ENCODE measurements at regions of chr1 and their contacts with region 1.

Region 1: DNA sequence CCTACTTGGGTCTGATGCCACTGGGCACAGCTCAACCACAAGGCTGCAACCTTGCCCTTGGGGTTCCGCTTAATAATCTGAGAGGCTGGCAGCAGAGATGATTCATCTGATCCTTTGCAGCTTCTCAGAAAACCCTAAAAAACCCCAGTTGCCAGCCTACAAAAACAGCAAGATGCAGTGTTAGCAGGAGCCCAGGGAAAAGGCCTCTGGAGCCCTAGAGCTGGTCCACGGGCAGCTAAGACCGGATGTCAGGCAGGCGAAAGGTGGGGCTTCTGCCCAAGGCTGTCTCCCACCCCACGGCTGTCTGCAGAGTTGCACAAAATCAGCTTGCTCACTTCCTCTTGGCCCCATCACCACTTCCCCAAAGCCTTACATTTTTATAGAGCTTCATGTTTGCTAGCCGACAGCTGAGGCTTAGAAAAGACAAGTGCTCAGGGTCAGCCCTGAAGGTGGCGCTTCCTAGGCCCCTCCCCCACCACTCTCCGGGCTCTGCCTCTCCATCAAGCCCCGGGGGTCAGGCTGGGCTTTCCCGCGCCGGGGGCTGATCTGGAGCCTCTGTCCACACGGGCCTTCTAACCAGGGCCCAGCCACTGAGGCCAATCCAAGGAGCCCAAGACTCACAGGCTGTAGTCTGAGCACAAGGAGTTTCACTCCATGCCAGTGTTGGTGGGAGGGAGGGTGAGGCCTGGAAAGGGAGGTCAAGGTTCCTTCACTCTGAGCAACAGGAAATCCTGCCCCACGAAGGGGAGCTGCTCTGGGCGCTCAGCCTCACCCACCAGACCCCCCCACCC is 4.2 kb upstream of the ADORA3 start:
- DNase-seq: peak; percentile 79
- ATAC-seq: peak; percentile 88
- H3K4me3 Mint-ChIP-seq: peak overlapping the region; percentile 63
- H3K27ac Mint-ChIP-seq: peak overlapping the region; percentile 50; the same call in 1 of the 2 replicates
- H3K4me1 Mint-ChIP-seq: peaks cover 7% of the 10 kb centered on the region
- H3K27me3 Mint-ChIP-seq: no peaks in the 10 kb centered on the region
- CTCF ChIP-seq: no peak

Region 2: DNA sequence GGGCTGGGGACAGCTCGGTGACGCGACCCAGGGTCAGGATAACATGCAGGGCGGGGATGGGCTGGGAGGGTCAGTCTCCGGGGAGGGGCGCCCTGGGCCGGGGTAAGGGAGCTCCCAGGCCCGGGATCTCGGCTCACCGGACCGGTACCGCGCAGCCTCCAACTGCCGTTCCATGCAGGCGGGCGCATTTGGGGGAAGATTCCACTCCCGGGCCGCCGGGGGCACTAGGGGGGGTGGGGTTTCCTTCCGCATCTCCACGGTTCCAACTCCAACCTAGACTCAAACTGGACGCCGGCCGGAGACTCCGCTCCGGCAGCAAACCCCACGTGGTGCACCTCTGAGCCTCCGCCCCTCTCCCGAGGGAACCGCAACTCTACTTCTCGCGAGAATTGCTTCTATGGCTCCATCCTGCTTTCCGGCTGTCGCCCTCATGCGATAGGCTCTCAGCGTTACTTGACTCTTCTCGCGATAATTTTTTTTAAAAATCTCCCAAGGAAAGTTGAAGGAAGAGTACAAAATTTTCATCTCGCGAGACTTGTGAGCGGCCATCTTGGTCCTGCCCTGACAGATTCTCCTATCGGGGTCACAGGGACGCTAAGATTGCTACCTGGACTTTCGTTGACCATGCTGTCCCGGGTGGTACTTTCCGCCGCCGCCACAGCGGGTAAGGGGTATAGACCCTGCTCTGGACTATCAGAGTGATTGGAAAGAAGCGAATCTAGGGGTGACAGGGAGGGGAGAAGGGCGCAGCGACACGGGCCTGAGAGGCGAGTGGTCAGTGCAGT is 58.5 kb before region 1 on chr1 and contains the starts of genes ATP5PB and WDR77:
- CTCF ChIA-PET with region 1: interaction called, 14 read pairs
- POLR2A ChIA-PET with region 1: no interaction called
- DNase-seq: peak; percentile 92
- ATAC-seq: peak; percentile 98
- H3K4me3 Mint-ChIP-seq: peak within 1 kb of the TSS; percentile 100
- H3K27ac Mint-ChIP-seq: peak within 1 kb of the TSS; percentile 99
- H3K4me1 Mint-ChIP-seq: peaks cover 31% of the 10 kb centered on the region
- H3K27me3 Mint-ChIP-seq: no peaks in the 10 kb centered on the region
- CTCF ChIP-seq: no peak
- total RNA-seq, gene ATP5PB: 243 to 284 TPM (median 253 TPM) in 3 replicates
- total RNA-seq, gene WDR77: 52.3 to 64.5 TPM (median 57.5 TPM) in 3 replicates

Region 3: DNA sequence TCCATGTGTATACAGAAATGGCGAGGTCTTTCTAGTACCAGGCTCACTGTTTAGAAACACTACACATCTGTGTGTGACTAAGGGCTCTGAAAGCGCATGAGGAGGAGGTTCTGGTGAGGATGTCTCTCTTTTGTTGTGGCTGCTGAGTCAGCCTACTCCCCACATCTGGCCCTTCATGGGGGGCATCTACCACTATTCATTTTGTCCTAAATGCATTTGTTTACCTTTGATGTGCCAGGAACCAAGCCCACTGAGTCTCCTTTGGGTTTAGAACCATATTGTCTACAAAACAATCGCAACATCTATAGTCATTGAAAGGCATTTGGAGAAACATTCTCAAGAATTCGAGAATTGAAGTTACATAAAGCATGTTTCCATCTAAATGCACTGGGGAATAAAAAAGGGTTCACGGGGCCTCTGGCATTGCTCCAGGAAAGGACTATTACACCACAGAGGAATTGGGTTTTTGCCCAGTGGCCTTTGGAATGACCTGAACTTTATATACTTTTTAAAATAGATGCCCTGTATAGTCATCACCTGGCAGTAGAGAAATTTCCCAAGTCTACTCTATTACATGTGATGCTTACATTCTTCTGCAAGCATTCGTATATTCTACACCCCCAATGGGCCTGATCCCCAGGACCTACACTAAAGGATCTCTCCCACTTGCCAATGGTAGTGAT is 30.9 kb after region 1 on chr1:
- CTCF ChIA-PET with region 1: interaction called, 18 read pairs
- POLR2A ChIA-PET with region 1: no interaction called
- DNase-seq: no peak
- ATAC-seq: peak; percentile 47
- H3K4me3 Mint-ChIP-seq: no peak overlapping the region
- H3K27ac Mint-ChIP-seq: peak overlapping the region; percentile 16; the same call in 1 of the 2 replicates
- H3K4me1 Mint-ChIP-seq: peaks cover 23% of the 10 kb centered on the region
- H3K27me3 Mint-ChIP-seq: peaks cover 19% of the 10 kb centered on the region
- CTCF ChIP-seq: no peak

Region 4: GRCh38 chr1:111565079-111565478 is 57.5 kb after region 1 on chr1:
- CTCF ChIA-PET with region 1: no interaction called
- POLR2A ChIA-PET with region 1: no interaction called
- DNase-seq: no peak
- ATAC-seq: no peak
- H3K4me3 Mint-ChIP-seq: no peak overlapping the region
- H3K27ac Mint-ChIP-seq: no peak overlapping the region
- H3K4me1 Mint-ChIP-seq: no peaks in the 10 kb centered on the region
- H3K27me3 Mint-ChIP-seq: no peaks in the 10 kb centered on the region
- CTCF ChIP-seq: no peak

Region 5: GRCh38 chr1:111628153-111628552 is 120.5 kb after region 1 on chr1:
- CTCF ChIA-PET with region 1: interaction called, 13 read pairs
- POLR2A ChIA-PET with region 1: no interaction called
- DNase-seq: no peak
- ATAC-seq: no peak
- H3K4me3 Mint-ChIP-seq: no peak overlapping the region
- H3K27ac Mint-ChIP-seq: peak overlapping the region; percentile 78
- H3K4me1 Mint-ChIP-seq: peaks cover 12% of the 10 kb centered on the region
- H3K27me3 Mint-ChIP-seq: no peaks in the 10 kb centered on the region
- CTCF ChIP-seq: no peak

Region 6: GRCh38 chr1:111699268-111699667 is 191.7 kb after region 1 on chr1:
- CTCF ChIA-PET with region 1: interaction called, 11 read pairs
- POLR2A ChIA-PET with region 1: no interaction called
- DNase-seq: no peak
- ATAC-seq: no peak
- H3K4me3 Mint-ChIP-seq: no peak overlapping the region
- H3K27ac Mint-ChIP-seq: no peak overlapping the region
- H3K4me1 Mint-ChIP-seq: no peaks in the 10 kb centered on the region
- H3K27me3 Mint-ChIP-seq: no peaks in the 10 kb centered on the region
- CTCF ChIP-seq: no peak

Region 7: DNA sequence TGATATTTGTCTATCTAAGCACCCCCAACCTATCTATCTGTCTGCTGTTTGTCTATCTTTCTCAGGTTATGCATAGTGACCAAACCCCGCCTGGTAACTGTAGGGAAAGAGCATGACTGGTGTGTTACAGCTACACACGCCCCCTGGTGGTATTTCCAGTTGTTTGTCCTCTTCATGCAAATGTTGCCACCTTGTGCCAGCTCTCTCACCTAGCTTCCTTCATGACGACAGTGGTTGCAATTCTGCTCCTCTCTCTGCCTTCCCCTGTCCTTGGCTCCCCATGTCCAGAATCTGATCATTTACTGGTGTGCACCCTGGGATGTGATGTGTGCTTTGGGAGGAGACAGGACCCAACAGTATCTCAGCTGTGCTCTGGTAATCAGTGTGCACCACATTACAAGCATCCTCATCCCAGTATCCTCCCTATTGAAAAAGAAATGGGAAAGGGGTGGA is 239.7 kb after region 1 on chr1:
- CTCF ChIA-PET with region 1: interaction called, 28 read pairs
- POLR2A ChIA-PET with region 1: no interaction called
- DNase-seq: peak; percentile 65
- ATAC-seq: peak; percentile 73
- H3K4me3 Mint-ChIP-seq: no peak overlapping the region
- H3K27ac Mint-ChIP-seq: no peak overlapping the region; the same call in 1 of the 2 replicates
- H3K4me1 Mint-ChIP-seq: peaks cover 31% of the 10 kb centered on the region
- H3K27me3 Mint-ChIP-seq: peaks cover 12% of the 10 kb centered on the region
- CTCF ChIP-seq: peak; percentile 72

Measured in WTC11 (cell line).